ENCODE measurements at regions of chr3 and their contacts with region 1.

Region 1: DNA sequence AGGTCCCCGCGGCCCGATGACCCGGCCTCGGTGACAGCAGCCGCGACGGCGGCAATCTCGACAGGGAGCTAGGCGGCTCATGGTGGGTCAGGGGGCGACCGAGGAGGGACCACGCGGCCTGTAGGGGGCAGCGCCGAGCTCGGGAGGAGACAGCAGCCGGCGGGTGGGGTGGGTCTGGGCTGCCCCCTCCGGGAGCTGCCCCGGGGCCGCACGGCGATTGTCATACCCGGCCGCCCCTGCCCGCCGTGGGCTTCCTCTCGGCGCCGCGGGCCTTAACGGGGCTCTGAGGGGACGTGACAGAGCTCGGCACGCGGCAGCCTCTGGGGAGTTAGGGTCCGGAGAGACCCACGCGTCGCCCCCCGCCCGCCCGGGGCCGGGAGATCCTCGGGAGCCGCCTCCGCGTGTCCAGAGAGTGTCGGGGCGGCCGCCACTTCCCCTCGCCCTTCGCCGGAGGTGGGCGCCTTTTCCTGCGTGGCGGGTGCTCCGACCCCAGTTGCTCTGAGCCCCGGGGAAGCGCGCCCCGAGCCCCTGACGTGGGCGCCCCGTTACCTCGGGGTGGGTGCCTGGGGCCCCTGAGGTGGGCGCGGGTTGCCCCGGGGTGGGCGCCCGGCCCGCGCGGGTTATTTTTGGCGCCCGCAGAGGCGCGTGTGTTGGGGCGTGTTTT is 539 bp upstream of the PLCL2 start:
- DNase-seq: peak; percentile 74
- ATAC-seq: peak; percentile 35
- H3K4me3 Mint-ChIP-seq: peak overlapping the region; percentile 92
- H3K27ac Mint-ChIP-seq: peak overlapping the region; percentile 96
- H3K4me1 Mint-ChIP-seq: peaks cover 29% of the 10 kb centered on the region
- H3K27me3 Mint-ChIP-seq: peaks cover 6% of the 10 kb centered on the region

Region 2: GRCh38 chr3:16692486-16693378 is 191.5 kb before region 1 on chr3:
- CTCF ChIA-PET with region 1: no interaction called
- POLR2A ChIA-PET with region 1: no interaction called
- DNase-seq: no peak
- ATAC-seq: no peak
- H3K4me3 Mint-ChIP-seq: no peak overlapping the region
- H3K27ac Mint-ChIP-seq: no peak overlapping the region
- H3K4me1 Mint-ChIP-seq: peaks cover 3% of the 10 kb centered on the region
- H3K27me3 Mint-ChIP-seq: peaks cover 6% of the 10 kb centered on the region

Region 3: DNA sequence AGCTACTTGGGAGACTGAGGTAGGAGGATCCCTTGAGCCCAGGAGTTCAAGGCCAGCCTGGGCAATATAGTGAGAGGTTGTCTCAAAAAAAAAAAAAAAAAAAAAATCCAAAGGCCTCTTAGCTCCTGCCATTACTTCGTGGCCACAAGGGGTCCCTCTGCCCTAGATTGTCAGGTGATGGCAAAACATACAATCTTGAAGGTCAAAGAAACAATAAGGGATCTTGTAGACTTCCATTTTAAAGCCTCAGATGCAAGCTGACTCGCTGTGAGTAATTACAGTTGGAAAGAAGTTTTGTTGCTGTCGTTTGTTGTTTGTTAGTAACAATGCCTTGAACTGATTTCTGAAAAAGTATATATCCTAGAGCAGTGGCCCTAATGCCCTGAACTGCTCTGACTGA is 55.4 kb before region 1 on chr3:
- CTCF ChIA-PET with region 1: interaction called, 10 read pairs
- POLR2A ChIA-PET with region 1: interaction called, 3 read pairs
- DNase-seq: peak; percentile 64
- ATAC-seq: peak; percentile 50
- H3K4me3 Mint-ChIP-seq: no peak overlapping the region
- H3K27ac Mint-ChIP-seq: no peak overlapping the region
- H3K4me1 Mint-ChIP-seq: peaks cover 12% of the 10 kb centered on the region
- H3K27me3 Mint-ChIP-seq: no peaks in the 10 kb centered on the region

Region 4: GRCh38 chr3:16842272-16843270 is 41.6 kb before region 1 on chr3:
- CTCF ChIA-PET with region 1: interaction called, 41 read pairs
- POLR2A ChIA-PET with region 1: interaction called, 34 read pairs
- DNase-seq: peak; percentile 81
- ATAC-seq: peak; percentile 85
- H3K4me3 Mint-ChIP-seq: peak overlapping the region; percentile 77
- H3K27ac Mint-ChIP-seq: peak overlapping the region; percentile 99
- H3K4me1 Mint-ChIP-seq: peaks cover 71% of the 10 kb centered on the region
- H3K27me3 Mint-ChIP-seq: no peaks in the 10 kb centered on the region

Region 5: DNA sequence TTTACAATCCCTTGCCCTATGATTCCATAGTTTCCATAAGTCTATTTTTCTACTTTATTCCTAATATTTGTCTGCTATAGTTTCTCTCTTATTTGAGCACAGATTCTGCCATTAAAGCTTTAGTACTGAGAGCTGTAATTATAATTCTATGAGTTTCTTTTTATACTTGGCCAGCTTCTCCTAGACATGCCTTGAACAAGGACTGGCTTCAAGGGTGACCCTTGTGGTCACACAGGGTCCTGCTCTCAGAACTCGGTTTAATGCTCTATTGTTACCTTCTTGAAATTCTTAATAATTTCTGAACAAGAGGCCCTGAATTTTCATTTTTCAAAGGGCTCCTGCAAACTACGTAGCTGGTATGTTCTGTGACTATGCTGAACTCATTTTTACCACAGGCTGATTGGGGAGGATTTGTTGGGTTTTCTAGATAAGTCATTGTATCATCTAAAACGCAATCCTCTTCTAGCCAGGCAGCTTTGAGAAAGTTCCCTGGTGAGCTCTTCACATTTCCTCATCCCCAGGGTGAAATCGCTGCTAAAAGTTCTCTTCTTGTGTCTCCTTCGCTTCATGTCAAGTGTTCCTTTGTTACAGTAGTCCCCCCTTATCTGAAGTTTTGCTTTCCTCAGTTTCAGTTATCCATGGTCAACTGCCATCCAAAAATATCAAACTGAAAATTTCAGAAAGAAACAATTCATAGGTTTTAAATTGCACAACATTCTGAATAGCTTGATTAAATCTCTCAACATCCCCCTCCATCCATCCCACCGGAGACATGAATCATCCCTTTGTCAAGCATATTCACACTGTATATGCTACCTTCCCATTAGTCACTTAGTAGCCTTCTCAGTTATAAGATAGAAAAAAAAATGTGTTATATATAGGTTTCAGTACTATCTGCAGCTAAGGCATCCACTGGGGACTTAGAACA is 12.0 kb before region 1 on chr3:
- CTCF ChIA-PET with region 1: interaction called, 14 read pairs
- POLR2A ChIA-PET with region 1: interaction called, 3 read pairs
- DNase-seq: no peak
- ATAC-seq: no peak
- H3K4me3 Mint-ChIP-seq: no peak overlapping the region
- H3K27ac Mint-ChIP-seq: no peak overlapping the region
- H3K4me1 Mint-ChIP-seq: peaks cover 4% of the 10 kb centered on the region
- H3K27me3 Mint-ChIP-seq: peaks cover 16% of the 10 kb centered on the region

Region 6: GRCh38 chr3:16897254-16897926 is 13.2 kb after region 1 on chr3:
- CTCF ChIA-PET with region 1: interaction called, 25 read pairs
- POLR2A ChIA-PET with region 1: interaction called, 10 read pairs
- DNase-seq: no peak
- ATAC-seq: no peak
- H3K4me3 Mint-ChIP-seq: peak overlapping the region; percentile 10
- H3K27ac Mint-ChIP-seq: no peak overlapping the region
- H3K4me1 Mint-ChIP-seq: peaks cover 70% of the 10 kb centered on the region
- H3K27me3 Mint-ChIP-seq: no peaks in the 10 kb centered on the region

Region 7: GRCh38 chr3:17233398-17233800 is 349.2 kb after region 1 on chr3:
- CTCF ChIA-PET with region 1: interaction called, 11 read pairs
- POLR2A ChIA-PET with region 1: no interaction called
- DNase-seq: peak; percentile 61
- ATAC-seq: peak; percentile 93
- H3K4me3 Mint-ChIP-seq: no peak overlapping the region
- H3K27ac Mint-ChIP-seq: peak overlapping the region; percentile 47
- H3K4me1 Mint-ChIP-seq: peaks cover 35% of the 10 kb centered on the region
- H3K27me3 Mint-ChIP-seq: no peaks in the 10 kb centered on the region

Measured in activated CD8-positive, alpha-beta T cell treated with anti-CD3 and anti-CD28 coated beads, Interleukin-2, amount 10 ng/mL, durations not matched to agents 7 days and 5 days (primary cell).